K562 (cell line): ENCODE measurements at regions of chr18 and their contacts with region 1.

Region 1: GRCh38 chr18:23503038-23503962 is at the start of gene RMC1:
- DNase-seq: peak; percentile 98
- ATAC-seq: peak; percentile 92
- H3K4me3 ChIP-seq: peak within 1 kb of the TSS; percentile 84
- H3K27ac ChIP-seq: peak within 1 kb of the TSS; percentile 87
- H3K4me1 ChIP-seq: peaks cover 20 to 21% of the 10 kb centered on the region in 2 experiments; a peak in 4 of 5 replicates
- H3K27me3 ChIP-seq: no peaks in the 10 kb centered on the region
- CTCF ChIP-seq: peak; percentile 33 to 53 (median 45)
- EP300 ChIP-seq: peak; percentile 18; the same call in 1 of the 2 replicates
- POLR2A ChIP-seq: peak; percentile 97
- RAD21 ChIP-seq: peak in 1 of 2 experiments; percentile 50; a peak in 3 of 4 replicates
- polyA plus RNA-seq, gene RMC1: 7.5 to 10.5 TPM

Region 2: DNA sequence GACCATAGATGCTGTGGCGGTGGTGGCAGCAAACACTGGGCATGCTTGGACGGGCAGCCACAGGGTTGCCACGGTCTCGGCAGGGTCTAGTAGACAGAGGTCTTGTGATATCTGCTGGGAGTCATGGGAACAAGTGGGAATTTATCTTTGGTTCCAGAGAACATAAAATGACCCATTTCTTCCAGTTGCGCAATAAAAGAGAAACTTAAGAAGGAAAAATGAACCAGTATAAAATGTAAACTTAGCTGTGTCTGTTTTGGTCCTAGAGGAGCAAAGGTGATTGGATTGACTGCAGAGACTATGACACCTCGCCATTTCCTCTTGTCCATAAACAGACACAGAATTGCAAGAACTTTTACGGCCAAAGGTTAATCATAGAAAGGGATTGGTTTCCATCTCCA is 702.7 kb before region 1 on chr18:
- CTCF ChIA-PET with region 1: no interaction called
- POLR2A ChIA-PET with region 1: no interaction called
- in situ Hi-C with region 1: no loop called
- intact Hi-C with region 1: loop called (anchors 5 kb)
- DNase-seq: no peak
- ATAC-seq: no peak
- H3K4me3 ChIP-seq: no peak overlapping the region
- H3K27ac ChIP-seq: no peak overlapping the region
- H3K4me1 ChIP-seq: peaks cover 0 to 3% of the 10 kb centered on the region in 2 experiments; a peak in 1 of 5 replicates
- H3K27me3 ChIP-seq: peaks cover 0 to 3% of the 10 kb centered on the region in 2 experiments; a peak in 2 of 5 replicates
- CTCF ChIP-seq: no peak
- EP300 ChIP-seq: no peak
- POLR2A ChIP-seq: no peak
- RAD21 ChIP-seq: no peak

Region 3: DNA sequence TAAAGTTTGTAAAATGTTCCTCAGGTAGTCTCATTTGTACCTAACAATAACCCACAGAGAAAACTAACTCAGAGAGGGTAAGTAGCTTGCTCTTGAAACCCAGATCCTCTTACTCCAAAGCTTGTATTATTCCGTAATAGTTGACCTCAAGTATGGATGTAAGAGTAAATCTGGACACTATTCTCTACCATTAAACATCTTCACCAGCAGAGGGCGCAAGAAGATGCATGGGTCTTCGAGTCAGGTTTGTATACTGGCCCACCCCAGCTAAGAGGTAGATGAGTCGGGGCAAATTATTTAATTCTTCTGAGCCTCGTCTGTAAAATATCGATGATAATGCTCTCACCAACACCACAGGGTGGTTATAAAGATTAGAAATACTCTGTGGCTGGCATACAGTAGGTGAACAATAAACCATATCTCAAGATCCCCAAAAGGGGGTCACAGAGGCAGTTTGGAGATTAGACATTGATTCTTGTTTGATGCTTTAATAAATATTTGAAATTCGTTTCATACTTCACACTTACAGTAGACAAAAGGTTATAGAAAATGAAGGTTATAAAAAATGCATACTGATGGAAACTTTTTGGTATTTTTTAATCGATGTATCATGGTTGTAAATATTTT is 371.5 kb before region 1 on chr18:
- CTCF ChIA-PET with region 1: interaction called, 5 read pairs
- POLR2A ChIA-PET with region 1: interaction called, 4 read pairs
- in situ Hi-C with region 1: no loop called
- intact Hi-C with region 1: loop called (anchors 10 kb)
- DNase-seq: peak; percentile 79 to 85 (median 82)
- ATAC-seq: peak; percentile 88
- H3K4me3 ChIP-seq: no peak overlapping the region
- H3K27ac ChIP-seq: no peak overlapping the region
- H3K4me1 ChIP-seq: peaks cover 0 to 20% of the 10 kb centered on the region in 2 experiments; a peak in 2 of 5 replicates
- H3K27me3 ChIP-seq: peaks cover 28 to 32% of the 10 kb centered on the region in 2 experiments
- CTCF ChIP-seq: peak; percentile 75 to 81 (median 81)
- EP300 ChIP-seq: no peak
- POLR2A ChIP-seq: no peak
- RAD21 ChIP-seq: peak; percentile 84 to 90

Region 4: DNA sequence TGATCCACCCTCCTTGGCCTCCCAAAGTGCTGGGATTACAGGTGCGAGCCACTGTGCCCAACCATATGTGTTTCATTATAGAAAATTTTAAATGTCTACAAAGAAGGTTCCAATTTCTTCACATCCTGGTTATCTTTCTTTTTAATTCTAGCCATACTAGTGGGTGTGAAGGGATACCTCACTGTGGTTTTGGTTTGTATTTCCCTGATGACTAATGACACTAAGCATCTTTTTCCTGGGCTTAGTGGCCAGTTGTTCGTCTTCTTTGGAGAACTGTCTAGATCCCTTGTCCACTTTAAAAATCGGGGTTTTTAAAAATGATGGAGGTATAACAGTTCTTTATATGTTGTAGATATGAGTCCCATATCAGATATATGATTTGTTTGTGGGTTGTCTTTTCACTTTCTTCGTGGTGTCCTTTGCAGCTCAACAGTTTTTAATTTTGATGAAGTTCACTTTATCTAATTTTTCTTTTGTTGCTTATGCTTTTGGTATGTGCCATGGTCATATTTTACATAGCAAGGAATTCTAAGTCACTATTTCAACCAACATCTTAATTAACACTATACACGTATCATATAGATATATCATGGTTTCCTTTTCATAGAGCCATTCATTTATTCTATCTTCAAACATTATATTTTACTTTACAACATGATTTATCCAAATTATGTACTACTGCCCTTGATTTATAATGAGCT is 185.2 kb before region 1 on chr18:
- CTCF ChIA-PET with region 1: no interaction called
- POLR2A ChIA-PET with region 1: no interaction called
- in situ Hi-C with region 1: no loop called
- intact Hi-C with region 1: no loop called
- DNase-seq: no peak
- ATAC-seq: no peak
- H3K4me3 ChIP-seq: no peak overlapping the region
- H3K27ac ChIP-seq: no peak overlapping the region
- H3K4me1 ChIP-seq: no peaks in the 10 kb centered on the region
- H3K27me3 ChIP-seq: no peaks in the 10 kb centered on the region
- CTCF ChIP-seq: no peak
- EP300 ChIP-seq: no peak
- POLR2A ChIP-seq: no peak
- RAD21 ChIP-seq: no peak

Region 5: DNA sequence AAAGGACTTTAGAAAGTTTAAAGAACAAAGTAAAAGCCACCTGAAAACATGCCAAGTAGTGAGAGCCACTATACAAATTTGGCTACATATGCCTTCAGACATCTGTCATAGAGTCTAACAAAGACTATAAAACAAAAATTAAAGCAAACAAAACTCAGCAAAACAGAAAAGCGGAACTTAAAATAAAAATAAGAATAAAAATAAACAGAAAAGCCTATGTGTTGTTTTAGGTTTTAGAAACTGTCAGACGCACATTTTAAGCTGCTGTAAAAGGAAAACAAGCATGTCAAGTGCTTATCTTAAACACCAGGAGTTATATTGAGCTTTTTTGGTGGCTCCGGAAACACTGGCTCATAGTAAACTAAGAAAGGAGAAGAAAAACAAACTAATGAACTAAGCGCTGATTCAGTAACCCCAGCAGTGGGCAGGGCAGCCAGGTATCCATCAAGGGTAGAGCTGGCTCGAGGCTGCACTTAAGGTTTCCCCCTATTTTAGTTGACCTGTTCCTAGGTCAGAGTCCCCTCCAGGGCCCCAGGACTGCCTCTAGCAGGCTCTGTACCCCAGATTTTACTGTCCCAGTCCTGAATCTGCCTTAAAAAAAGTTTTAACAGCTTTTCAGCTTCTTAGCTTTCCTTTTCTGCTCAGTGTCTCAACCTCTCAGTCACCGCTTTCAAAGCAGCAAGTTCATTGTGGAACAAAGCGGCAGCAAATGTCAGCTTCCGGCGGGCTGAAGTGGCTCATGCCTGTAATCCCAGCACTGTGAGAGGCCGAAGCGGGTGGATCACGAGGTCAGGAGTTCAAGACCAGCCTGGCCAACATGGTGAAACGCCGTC is 15.3 kb before region 1 on chr18:
- CTCF ChIA-PET with region 1: no interaction called
- POLR2A ChIA-PET with region 1: interaction called, 20 read pairs
- in situ Hi-C with region 1: no loop called
- intact Hi-C with region 1: no loop called
- DNase-seq: peak; percentile 36 to 84 (median 55)
- ATAC-seq: peak; percentile 92
- H3K4me3 ChIP-seq: peak overlapping the region; percentile 17
- H3K27ac ChIP-seq: peak overlapping the region; percentile 77
- H3K4me1 ChIP-seq: peaks cover 11 to 12% of the 10 kb centered on the region in 2 experiments
- H3K27me3 ChIP-seq: no peaks in the 10 kb centered on the region
- CTCF ChIP-seq: 0 out of 6 replicates have a peak, but pooled peaks of 1 of the 3 experiments have one; percentile 1
- EP300 ChIP-seq: peak; percentile 73
- POLR2A ChIP-seq: peak; percentile 3; the same call in 1 of the 2 replicates
- RAD21 ChIP-seq: peak in 1 of 2 experiments; percentile 14; a peak in 1 of 4 replicates

Region 6: GRCh38 chr18:23703057-23703986 is 200.0 kb after region 1 on chr18:
- CTCF ChIA-PET with region 1: no interaction called
- POLR2A ChIA-PET with region 1: no interaction called
- in situ Hi-C with region 1: no loop called
- intact Hi-C with region 1: loop called (anchors 2 kb)
- DNase-seq: peak; percentile 39 to 51 (median 43)
- ATAC-seq: peak; percentile 87
- H3K4me3 ChIP-seq: no peak overlapping the region
- H3K27ac ChIP-seq: no peak overlapping the region
- H3K4me1 ChIP-seq: peaks cover 0 to 4% of the 10 kb centered on the region in 2 experiments; a peak in 1 of 5 replicates
- H3K27me3 ChIP-seq: peaks cover 19 to 26% of the 10 kb centered on the region in 2 experiments
- CTCF ChIP-seq: peak; percentile 57 to 84 (median 64); a peak in 5 of 6 replicates
- EP300 ChIP-seq: no peak
- POLR2A ChIP-seq: no peak
- RAD21 ChIP-seq: peak; percentile 80 to 91

Region 7: GRCh38 chr18:23719634-23720201 is 216.4 kb after region 1 on chr18:
- CTCF ChIA-PET with region 1: no interaction called
- POLR2A ChIA-PET with region 1: no interaction called
- in situ Hi-C with region 1: loop called (anchors 10 kb)
- intact Hi-C with region 1: no loop called
- DNase-seq: peak; percentile 61 to 77 (median 70)
- ATAC-seq: peak; percentile 89
- H3K4me3 ChIP-seq: no peak overlapping the region
- H3K27ac ChIP-seq: peak overlapping the region; percentile 48; the same call in 2 of the 3 replicates
- H3K4me1 ChIP-seq: peaks cover 0 to 31% of the 10 kb centered on the region in 2 experiments; a peak in 3 of 5 replicates
- H3K27me3 ChIP-seq: peaks cover 0 to 6% of the 10 kb centered on the region in 2 experiments; a peak in 1 of 5 replicates
- CTCF ChIP-seq: no peak
- EP300 ChIP-seq: peak; percentile 22; the same call in 1 of the 2 replicates
- POLR2A ChIP-seq: no peak
- RAD21 ChIP-seq: no peak